Ascending aorta (tissue), 2 donors: ENCODE measurements at regions of chr3 and their contacts with region 1.

Region 1: GRCh38 chr3:153161138-153161713 is 800 bp upstream of the RAP2B start:
- DNase-seq: peak; percentile 95 to 98
- H3K4me3 ChIP-seq: peak overlapping the region; percentile 77 to 78
- H3K27ac ChIP-seq: peak overlapping the region; percentile 92
- H3K4me1 ChIP-seq: peaks cover 0 to 16% of the 10 kb centered on the region in 2 donors
- H3K27me3 ChIP-seq: no peaks in the 10 kb centered on the region
- CTCF ChIP-seq: no peak

Region 2: GRCh38 chr3:153052096-153052460 is 109.1 kb before region 1 on chr3:
- intact Hi-C with region 1: loop called (anchors 2 kb)
- DNase-seq: peak in 1 of 2 donors; percentile 81
- H3K4me3 ChIP-seq: no peak overlapping the region
- H3K27ac ChIP-seq: peak overlapping the region; percentile 61 to 72
- H3K4me1 ChIP-seq: peaks cover 0 to 8% of the 10 kb centered on the region in 2 donors
- H3K27me3 ChIP-seq: no peaks in the 10 kb centered on the region
- CTCF ChIP-seq: no peak

Region 3: DNA sequence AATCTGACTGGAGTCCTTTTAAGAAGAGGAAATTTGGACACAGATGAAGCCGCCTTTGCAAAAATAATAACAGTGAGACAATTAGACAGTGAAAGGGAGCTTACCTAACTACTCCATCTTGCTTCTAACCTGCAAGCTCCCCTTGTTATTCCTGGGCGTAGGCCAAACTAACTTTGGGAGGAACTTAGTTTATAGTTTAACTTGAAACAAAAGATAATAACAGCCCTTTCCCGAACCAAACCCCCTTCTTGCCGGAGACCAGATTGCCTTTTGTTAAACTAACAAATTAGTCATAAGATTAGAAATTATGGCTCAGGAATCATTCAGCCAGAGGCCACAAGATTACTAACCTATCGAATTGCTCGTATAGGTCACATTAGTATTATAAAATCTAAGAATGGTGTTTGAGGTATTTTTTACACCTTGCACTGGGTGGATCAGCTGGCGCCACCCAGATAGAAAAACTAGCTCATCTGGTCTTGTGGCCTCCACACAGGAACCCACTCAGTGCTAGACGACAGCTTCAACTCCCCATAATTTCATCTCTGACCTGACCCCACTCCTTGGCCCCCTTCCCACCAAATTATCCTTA is 64.5 kb before region 1 on chr3:
- intact Hi-C with region 1: no loop called
- DNase-seq: no peak
- H3K4me3 ChIP-seq: no peak overlapping the region
- H3K27ac ChIP-seq: no peak overlapping the region
- H3K4me1 ChIP-seq: no peaks in the 10 kb centered on the region
- H3K27me3 ChIP-seq: no peaks in the 10 kb centered on the region
- CTCF ChIP-seq: no peak

Region 4: GRCh38 chr3:153284282-153284938 is 123.2 kb after region 1 on chr3:
- intact Hi-C with region 1: loop called (anchors 5 kb)
- DNase-seq: peak; percentile 55 to 81
- H3K4me3 ChIP-seq: no peak overlapping the region
- H3K27ac ChIP-seq: no peak overlapping the region
- H3K4me1 ChIP-seq: no peaks in the 10 kb centered on the region
- H3K27me3 ChIP-seq: no peaks in the 10 kb centered on the region
- CTCF ChIP-seq: no peak

Region 5: DNA sequence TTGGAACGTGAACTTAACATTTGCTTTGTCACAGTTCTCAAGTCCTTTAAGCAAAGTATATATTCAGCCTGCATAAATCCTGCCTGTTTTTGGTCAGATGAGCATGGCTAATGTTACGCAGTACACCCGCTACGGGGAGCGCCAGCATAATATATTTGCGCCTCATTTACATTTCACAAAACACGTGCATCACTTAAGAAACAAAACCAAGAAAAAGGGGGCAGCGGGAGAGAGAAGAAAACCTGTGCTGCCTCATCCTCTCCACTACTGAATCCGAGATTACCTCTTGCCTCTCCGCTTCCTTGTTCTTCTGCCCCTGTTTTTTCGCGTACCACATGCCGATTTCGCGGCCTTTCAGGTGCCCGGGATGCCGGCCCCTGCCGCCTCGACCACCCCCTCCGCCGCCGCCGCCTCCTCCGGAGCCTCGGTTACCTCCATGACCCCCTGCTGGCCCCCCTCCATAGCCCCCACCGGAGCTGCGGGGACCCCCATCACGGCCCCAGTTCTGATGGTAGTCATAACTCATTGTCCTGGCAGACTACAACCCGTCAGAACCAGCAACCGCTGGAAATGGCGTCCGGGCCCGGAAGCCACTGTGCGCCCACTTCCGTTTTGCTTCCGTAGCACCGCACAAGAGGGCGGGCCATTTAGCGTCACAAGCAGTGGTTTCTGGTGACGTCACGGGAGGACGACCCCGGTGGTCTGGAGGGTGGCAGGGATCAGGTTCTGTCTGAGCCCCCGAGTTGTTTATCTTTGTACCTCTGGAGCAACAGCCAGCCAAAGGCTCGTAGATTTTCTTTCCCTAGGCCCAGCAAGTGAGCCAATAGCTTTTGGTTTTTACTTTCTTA is 1162.9 kb after region 1 on chr3 and contains the start of gene DHX36:
- intact Hi-C with region 1: loop called (anchors 5 kb)
- DNase-seq: peak; percentile 66 to 94
- H3K4me3 ChIP-seq: peak within 1 kb of the TSS; percentile 73 to 82
- H3K27ac ChIP-seq: peak within 1 kb of the TSS; percentile 79 to 90
- H3K4me1 ChIP-seq: peaks cover 0 to 19% of the 10 kb centered on the region in 2 donors
- H3K27me3 ChIP-seq: no peaks in the 10 kb centered on the region
- CTCF ChIP-seq: no peak
- total RNA-seq, gene DHX36: 16.8 TPM